Endothelial cell of umbilical vein (primary cell): ENCODE measurements at regions of chr17 and their contacts with region 1.

Region 1: DNA sequence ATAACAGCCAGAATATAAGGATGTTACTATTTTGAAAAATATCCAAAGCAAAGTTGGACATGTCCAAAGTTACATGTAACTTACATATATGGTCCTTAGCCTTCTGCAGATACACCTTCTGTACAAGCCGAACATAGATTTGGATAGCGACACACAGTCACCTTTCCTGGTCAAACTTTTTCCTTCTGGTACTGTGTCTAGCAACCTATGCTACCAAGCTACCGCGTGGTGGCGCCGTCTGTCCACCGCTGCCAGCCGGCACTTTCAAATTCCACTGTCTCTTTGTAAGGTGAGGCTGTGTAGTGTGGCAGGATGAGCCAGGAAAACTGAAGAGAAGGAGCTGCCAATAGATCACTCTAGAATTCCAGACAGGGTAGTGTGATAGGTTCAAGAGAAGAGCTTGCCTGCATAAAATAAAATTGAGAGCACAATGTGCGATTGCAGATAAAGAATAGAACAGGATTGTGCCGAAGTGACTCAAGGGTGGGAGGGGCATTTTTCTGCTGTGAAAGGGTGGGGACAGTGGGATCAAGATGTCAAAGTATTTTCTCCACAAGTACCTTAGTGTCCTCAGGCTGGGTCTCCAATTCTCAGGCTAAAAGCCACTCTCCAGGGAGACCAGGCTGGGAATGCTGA is 366.9 kb downstream of the SLC39A11 start:
- DNase-seq: peak; percentile 53
- H3K4me3 ChIP-seq: no peak overlapping the region
- H3K27ac ChIP-seq: no peak overlapping the region
- H3K4me1 ChIP-seq: peaks cover 4% of the 10 kb centered on the region
- H3K27me3 ChIP-seq: no peaks in the 10 kb centered on the region
- CTCF ChIP-seq: peak; percentile 83 to 93
- POLR2A ChIP-seq: no peak

Region 2: GRCh38 chr17:72556944-72557826 is 168.4 kb before region 1 on chr17:
- CTCF ChIA-PET with region 1: interaction called, 34 read pairs
- POLR2A ChIA-PET with region 1: no interaction called
- dilution Hi-C with region 1: no loop called
- intact Hi-C with region 1: loop called (anchors 1 kb)
- DNase-seq: peak; percentile 22
- H3K4me3 ChIP-seq: no peak overlapping the region
- H3K27ac ChIP-seq: no peak overlapping the region
- H3K4me1 ChIP-seq: no peaks in the 10 kb centered on the region
- H3K27me3 ChIP-seq: no peaks in the 10 kb centered on the region
- CTCF ChIP-seq: peak; percentile 66 to 72
- POLR2A ChIP-seq: no peak

Region 3: GRCh38 chr17:72795946-72796345 is 70.4 kb after region 1 on chr17:
- CTCF ChIA-PET with region 1: no interaction called
- POLR2A ChIA-PET with region 1: no interaction called
- dilution Hi-C with region 1: no loop called
- intact Hi-C with region 1: no loop called
- DNase-seq: no peak
- H3K4me3 ChIP-seq: no peak overlapping the region
- H3K27ac ChIP-seq: no peak overlapping the region
- H3K4me1 ChIP-seq: no peaks in the 10 kb centered on the region
- H3K27me3 ChIP-seq: no peaks in the 10 kb centered on the region
- CTCF ChIP-seq: no peak
- POLR2A ChIP-seq: no peak

Region 4: DNA sequence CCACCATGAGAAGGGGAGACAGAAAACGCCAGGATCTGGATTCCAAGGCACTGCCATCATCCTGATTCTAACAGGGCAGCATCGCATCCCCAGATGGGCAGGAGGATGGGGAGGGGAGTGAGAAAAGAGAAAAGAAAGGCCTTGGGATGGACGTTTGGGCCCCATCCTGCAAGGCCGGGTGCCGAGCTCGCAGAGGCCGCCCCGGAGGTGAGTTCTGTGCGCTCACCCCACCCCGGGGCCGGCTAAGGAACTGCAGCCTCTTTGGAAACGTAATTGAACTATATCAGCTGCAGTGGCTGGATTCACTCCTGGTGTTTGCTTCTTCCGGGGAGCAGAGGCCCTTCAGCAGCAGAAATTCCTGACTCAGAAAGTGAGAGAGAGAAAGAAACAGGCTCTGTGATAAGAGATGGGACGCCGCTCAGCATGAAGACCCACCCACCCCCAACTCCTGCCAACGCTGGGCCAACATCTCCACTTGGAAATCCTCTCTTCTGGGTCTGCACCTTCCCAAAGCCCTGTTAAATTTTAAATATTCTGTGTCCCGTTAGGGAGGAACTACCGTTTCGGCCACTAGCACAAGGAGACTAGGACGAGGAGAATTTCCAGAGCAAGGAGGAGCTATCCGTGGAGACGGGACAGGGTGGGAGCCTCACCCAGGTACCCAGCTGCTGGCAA is 430.8 kb after region 1 on chr17:
- CTCF ChIA-PET with region 1: interaction called, 223 read pairs
- POLR2A ChIA-PET with region 1: no interaction called
- dilution Hi-C with region 1: no loop called
- intact Hi-C with region 1: loop called (anchors 1 kb)
- DNase-seq: peak; percentile 21
- H3K4me3 ChIP-seq: no peak overlapping the region
- H3K27ac ChIP-seq: no peak overlapping the region
- H3K4me1 ChIP-seq: no peaks in the 10 kb centered on the region
- H3K27me3 ChIP-seq: peaks cover 8 to 11% of the 10 kb centered on the region in 2 experiments
- CTCF ChIP-seq: peak; percentile 76 to 77
- POLR2A ChIP-seq: no peak

Region 5: GRCh38 chr17:73203135-73203787 is 477.7 kb after region 1 on chr17:
- CTCF ChIA-PET with region 1: interaction called, 10 read pairs
- POLR2A ChIA-PET with region 1: no interaction called
- dilution Hi-C with region 1: no loop called
- intact Hi-C with region 1: no loop called
- DNase-seq: peak; percentile 90
- H3K4me3 ChIP-seq: no peak overlapping the region
- H3K27ac ChIP-seq: peak overlapping the region; percentile 81
- H3K4me1 ChIP-seq: peaks cover 24% of the 10 kb centered on the region
- H3K27me3 ChIP-seq: no peaks in the 10 kb centered on the region
- CTCF ChIP-seq: no peak
- POLR2A ChIP-seq: no peak

Region 6: DNA sequence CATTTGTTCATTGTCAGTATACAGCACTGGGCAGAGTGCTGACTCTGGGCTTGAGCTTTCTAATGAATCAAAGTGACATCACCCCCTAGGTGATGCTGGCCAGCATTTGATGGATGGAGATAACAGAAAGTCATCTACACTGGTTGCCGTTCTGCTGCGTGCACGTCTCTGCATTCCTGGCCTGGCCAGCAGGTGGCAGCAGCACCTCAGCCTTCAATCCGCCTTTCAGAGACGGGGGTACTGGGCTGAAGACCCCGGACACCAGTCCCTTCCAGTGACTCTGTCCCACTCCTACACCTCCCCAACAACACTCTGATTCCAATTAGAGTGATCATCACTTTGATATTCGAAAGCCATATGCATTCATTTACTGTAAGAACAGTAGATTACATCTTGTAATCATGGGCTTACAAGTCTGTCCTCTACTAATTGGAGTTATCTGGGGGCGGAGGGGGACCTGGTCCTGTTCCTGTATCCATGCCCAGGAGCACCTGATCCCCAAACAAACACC is 530.2 kb after region 1 on chr17:
- CTCF ChIA-PET with region 1: interaction called, 73 read pairs
- POLR2A ChIA-PET with region 1: no interaction called
- dilution Hi-C with region 1: no loop called
- intact Hi-C with region 1: loop called (anchors 2 kb)
- DNase-seq: peak; percentile 53
- H3K4me3 ChIP-seq: no peak overlapping the region
- H3K27ac ChIP-seq: no peak overlapping the region
- H3K4me1 ChIP-seq: no peaks in the 10 kb centered on the region
- H3K27me3 ChIP-seq: no peaks in the 10 kb centered on the region
- CTCF ChIP-seq: peak; percentile 82 to 96
- POLR2A ChIP-seq: no peak

Region 7: DNA sequence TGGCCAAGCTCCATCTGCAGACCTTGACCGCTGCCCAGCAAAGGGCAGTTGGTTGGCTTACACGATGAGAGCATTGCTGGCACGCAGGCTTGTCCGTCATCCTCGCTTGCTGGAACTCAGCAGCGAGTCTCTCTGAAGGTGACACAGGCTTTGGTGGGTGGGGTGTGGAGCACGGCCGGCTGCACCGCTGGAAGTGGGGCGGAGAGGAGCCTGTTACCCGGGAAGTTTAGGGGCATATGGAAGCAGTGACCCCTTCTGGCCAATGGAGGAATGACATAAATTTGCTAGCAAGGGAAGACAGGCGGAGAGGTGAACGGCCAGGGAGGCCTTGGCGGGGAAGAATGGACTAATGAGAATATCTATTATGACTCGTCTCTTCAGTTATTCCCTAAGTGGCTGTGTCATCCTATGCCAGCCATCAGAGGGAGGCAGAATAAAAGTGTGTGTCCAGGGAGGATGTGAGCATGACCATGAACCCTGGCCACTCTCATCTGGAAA is 984.6 kb after region 1 on chr17:
- CTCF ChIA-PET with region 1: no interaction called
- POLR2A ChIA-PET with region 1: no interaction called
- dilution Hi-C with region 1: no loop called
- intact Hi-C with region 1: loop called (anchors 10 kb)
- DNase-seq: no peak
- H3K4me3 ChIP-seq: no peak overlapping the region
- H3K27ac ChIP-seq: no peak overlapping the region
- H3K4me1 ChIP-seq: no peaks in the 10 kb centered on the region
- H3K27me3 ChIP-seq: no peaks in the 10 kb centered on the region
- CTCF ChIP-seq: peak; percentile 45 to 51
- POLR2A ChIP-seq: no peak